Dendritic cell treated with granulocyte-macrophage colony-stimulating factor and Interleukin-4, amounts not matched to agents 40 ng/mL and 50 ng/mL, for 4 days (primary cell): ENCODE measurements at regions of chr17 and their contacts with region 1.

Region 1: GRCh38 chr17:59220376-59221158 is at the start of gene GDPD1:
- H3K4me3 Mint-ChIP-seq: peak within 1 kb of the TSS; percentile 97
- H3K27ac Mint-ChIP-seq: peak within 1 kb of the TSS; percentile 82
- H3K4me1 Mint-ChIP-seq: peaks cover 10% of the 10 kb centered on the region
- H3K27me3 Mint-ChIP-seq: peaks cover 3% of the 10 kb centered on the region

Region 2: DNA sequence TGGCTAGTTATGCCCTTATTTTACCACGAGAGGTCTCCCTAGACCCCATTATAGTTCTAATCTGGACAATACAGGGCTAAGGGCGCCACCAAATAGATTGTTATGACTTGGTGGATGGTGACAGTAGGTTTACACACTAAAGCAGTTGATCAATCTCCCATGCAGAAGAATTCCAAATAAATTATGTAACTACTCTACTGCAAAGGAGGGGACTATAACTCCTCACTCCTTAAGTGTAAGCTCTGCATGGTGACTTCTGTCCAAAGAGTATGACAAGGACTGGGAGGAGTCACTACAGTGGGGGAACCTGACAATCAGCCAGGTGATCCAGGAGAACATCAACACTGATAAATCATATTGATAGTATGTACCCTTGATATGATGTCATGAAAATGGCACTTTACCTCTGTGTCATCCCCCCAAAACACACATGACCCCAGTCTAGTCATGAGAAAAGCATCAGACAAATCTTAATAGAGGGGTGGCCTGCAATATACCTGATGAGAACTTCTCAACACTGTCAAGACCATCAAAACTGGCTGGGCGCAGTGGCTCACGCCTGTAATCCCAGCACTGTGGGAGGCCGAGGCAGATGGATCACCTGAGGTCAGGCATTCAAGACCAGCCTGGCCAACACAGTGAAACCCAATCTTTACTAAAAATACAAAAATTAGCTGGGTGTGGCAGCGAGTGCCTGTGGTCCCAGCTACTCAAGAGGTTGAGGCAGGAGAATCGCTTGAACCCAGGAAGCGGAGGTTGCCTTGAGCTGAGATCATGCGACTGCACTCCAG is 90.8 kb after region 1 on chr17:
- intact Hi-C with region 1: loop called (anchors 2 kb)
- H3K4me3 Mint-ChIP-seq: no peak overlapping the region
- H3K27ac Mint-ChIP-seq: peak overlapping the region; percentile 30
- H3K4me1 Mint-ChIP-seq: peaks cover 15% of the 10 kb centered on the region
- H3K27me3 Mint-ChIP-seq: no peaks in the 10 kb centered on the region